Activated naive CD8-positive, alpha-beta T cell treated with anti-CD3 and anti-CD28 coated beads, Interleukin-2, amount 10 ng/mL, durations not matched to agents 7 days and 5 days (primary cell): ENCODE measurements at regions of chr11 and their contacts with region 1.

Region 1: DNA sequence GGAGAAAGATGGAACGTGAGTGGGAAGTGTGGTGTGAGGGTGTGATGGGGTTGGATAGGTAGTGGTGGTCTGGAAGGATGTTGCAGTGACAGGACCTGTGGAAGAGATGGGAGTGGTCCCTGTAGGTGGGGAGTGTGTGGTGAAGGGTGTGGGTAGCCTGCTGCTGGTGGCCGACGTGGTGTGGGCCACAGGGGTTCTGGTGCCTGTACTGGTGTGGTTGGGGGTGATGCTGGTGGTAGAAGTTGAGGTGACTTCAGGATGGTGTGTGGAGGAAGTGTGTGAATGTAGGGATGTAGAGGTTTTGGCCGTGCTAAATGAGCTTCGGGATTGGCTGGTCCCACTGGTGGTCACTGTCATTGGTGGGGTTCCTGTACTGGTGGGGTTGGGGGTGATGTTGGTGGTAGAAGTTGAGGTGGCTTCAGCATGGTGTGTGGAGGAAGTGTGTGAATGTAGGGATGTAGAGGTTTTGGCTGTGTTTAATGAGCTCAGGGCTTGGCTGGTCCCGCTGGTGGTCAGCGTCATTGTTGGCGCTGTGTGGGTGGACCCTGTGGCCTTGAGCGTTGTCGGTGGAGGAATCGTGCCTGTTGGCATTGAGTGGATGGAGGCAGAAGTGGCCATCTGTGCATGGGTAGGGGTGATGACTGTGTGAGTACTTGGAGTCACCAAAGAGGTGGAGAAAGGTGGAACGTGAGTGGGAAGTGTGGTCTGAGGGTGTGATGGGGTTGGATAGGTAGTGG is 19.1 kb downstream of the MUC6 start:
- DNase-seq: no peak
- ATAC-seq: no peak
- H3K4me3 Mint-ChIP-seq: no peak overlapping the region
- H3K27ac Mint-ChIP-seq: no peak overlapping the region
- H3K4me1 Mint-ChIP-seq: peaks cover 17% of the 10 kb centered on the region
- H3K27me3 Mint-ChIP-seq: no peaks in the 10 kb centered on the region

Region 2: DNA sequence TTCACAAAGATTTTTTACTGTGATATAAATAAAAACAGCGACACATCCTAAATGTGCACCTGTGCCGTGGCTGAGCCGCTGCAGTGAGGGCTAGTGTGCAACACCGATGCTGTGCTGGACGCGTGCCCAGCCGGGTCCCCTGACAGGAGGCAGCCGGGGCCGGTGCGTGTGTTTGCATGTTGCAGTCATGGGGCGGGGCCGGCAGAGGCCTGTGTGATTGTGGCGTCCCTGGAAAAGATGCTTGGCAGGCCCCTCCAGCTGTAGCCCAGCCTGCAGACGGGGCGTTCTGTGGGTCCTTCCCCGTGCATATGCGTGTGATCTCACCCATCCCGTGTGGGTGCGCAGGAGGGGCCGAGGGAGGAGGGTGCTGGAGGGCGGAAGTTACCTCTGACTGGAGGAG is 11.5 kb before region 1 on chr11:
- POLR2A ChIA-PET with region 1: no interaction called
- DNase-seq: no peak
- ATAC-seq: no peak
- H3K4me3 Mint-ChIP-seq: no peak overlapping the region
- H3K27ac Mint-ChIP-seq: no peak overlapping the region
- H3K4me1 Mint-ChIP-seq: no peaks in the 10 kb centered on the region
- H3K27me3 Mint-ChIP-seq: no peaks in the 10 kb centered on the region

Region 3: GRCh38 chr11:1050581-1051355 is 33.3 kb after region 1 on chr11:
- POLR2A ChIA-PET with region 1: no interaction called
- DNase-seq: peak; percentile 85
- ATAC-seq: peak; percentile 93
- H3K4me3 Mint-ChIP-seq: no peak overlapping the region
- H3K27ac Mint-ChIP-seq: no peak overlapping the region
- H3K4me1 Mint-ChIP-seq: peaks cover 4% of the 10 kb centered on the region
- H3K27me3 Mint-ChIP-seq: peaks cover 10% of the 10 kb centered on the region

Region 4: GRCh38 chr11:1422481-1422880 is 405.0 kb after region 1 on chr11:
- POLR2A ChIA-PET with region 1: interaction called, 12 read pairs
- DNase-seq: no peak
- ATAC-seq: no peak
- H3K4me3 Mint-ChIP-seq: no peak overlapping the region
- H3K27ac Mint-ChIP-seq: no peak overlapping the region
- H3K4me1 Mint-ChIP-seq: no peaks in the 10 kb centered on the region
- H3K27me3 Mint-ChIP-seq: no peaks in the 10 kb centered on the region